Endothelial cell of umbilical vein (primary cell): ENCODE measurements at regions of chr3 and their contacts with region 1.

Region 1: GRCh38 chr3:69791919-69792399 is 52.7 kb downstream of the MITF start:
- DNase-seq: peak; percentile 79
- H3K4me3 ChIP-seq: no peak overlapping the region
- H3K27ac ChIP-seq: peak overlapping the region; percentile 5
- H3K4me1 ChIP-seq: peaks cover 20% of the 10 kb centered on the region
- H3K27me3 ChIP-seq: no peaks in the 10 kb centered on the region
- CTCF ChIP-seq: peak; percentile 22 to 38
- POLR2A ChIP-seq: no peak

Region 2: GRCh38 chr3:69451594-69451993 is 340.4 kb before region 1 on chr3:
- CTCF ChIA-PET with region 1: interaction called, 7 read pairs
- POLR2A ChIA-PET with region 1: no interaction called
- dilution Hi-C with region 1: no loop called
- intact Hi-C with region 1: loop called (anchors 10 kb)
- DNase-seq: peak; percentile 35
- H3K4me3 ChIP-seq: no peak overlapping the region
- H3K27ac ChIP-seq: no peak overlapping the region
- H3K4me1 ChIP-seq: no peaks in the 10 kb centered on the region
- H3K27me3 ChIP-seq: no peaks in the 10 kb centered on the region
- CTCF ChIP-seq: peak; percentile 23 to 36
- POLR2A ChIP-seq: no peak

Region 3: DNA sequence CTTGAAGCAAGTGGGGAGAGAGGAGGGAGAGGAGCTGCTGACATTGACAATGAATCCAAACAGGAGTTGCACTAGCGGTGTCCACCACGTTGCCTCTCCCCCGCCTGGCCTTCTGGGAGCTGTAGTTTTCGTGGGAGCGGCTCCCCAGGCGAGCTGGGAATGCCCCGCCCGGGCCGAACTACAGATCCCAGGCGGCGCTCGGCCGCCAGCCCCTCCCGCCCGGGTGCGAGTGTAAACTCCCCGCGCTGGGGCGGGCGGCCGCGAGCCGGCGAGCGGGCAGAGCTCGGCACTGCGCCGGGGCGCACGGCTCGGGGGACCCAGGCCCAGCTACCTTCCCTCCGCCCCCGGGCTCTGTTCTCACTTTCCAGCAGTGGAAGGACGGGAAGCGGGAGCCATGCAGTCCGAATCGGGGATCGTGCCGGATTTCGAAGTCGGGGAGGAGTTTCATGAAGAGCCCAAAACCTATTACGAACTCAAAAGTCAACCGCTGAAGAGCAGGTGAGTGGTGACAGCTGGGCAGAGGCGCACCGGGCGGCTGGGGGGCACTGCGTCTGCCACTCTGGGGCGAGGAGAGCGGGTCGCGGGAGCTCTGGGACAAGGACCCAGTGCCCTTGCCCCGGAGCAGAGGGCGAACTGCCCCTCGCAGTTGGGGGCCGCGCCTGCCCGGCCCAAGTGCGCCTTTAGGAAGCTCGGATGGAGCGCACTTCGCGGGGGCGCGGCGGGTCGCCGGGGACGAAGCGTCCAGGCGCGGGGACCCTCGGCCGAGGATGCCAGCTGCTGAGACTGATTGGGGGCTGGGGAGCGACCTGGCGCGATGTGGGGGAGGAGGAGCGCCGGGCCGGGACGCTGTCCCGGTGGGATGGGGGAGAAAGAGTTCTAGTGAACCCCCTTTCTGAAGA is 52.5 kb before region 1 on chr3 and contains the start of gene MITF:
- CTCF ChIA-PET with region 1: interaction called, 8 read pairs
- POLR2A ChIA-PET with region 1: no interaction called
- dilution Hi-C with region 1: no loop called
- intact Hi-C with region 1: loop called (anchors 1 kb)
- DNase-seq: peak; percentile 94
- H3K4me3 ChIP-seq: peak within 1 kb of the TSS; percentile 63 to 87 (median 74)
- H3K27ac ChIP-seq: no peak within 1 kb of the TSS
- H3K4me1 ChIP-seq: peaks cover 16% of the 10 kb centered on the region
- H3K27me3 ChIP-seq: peaks cover 0 to 6% of the 10 kb centered on the region in 2 experiments
- CTCF ChIP-seq: no peak
- POLR2A ChIP-seq: peak; percentile 30
- total RNA-seq, gene MITF: 2.5 and 3.9 TPM in 2 replicates

Region 4: GRCh38 chr3:69770219-69770618 is 21.7 kb before region 1 on chr3:
- CTCF ChIA-PET with region 1: interaction called, 6 read pairs
- POLR2A ChIA-PET with region 1: no interaction called
- dilution Hi-C with region 1: no loop called
- intact Hi-C with region 1: loop called (anchors 1 kb)
- DNase-seq: peak; percentile 77
- H3K4me3 ChIP-seq: no peak overlapping the region
- H3K27ac ChIP-seq: peak overlapping the region; percentile 66
- H3K4me1 ChIP-seq: peaks cover 22% of the 10 kb centered on the region
- H3K27me3 ChIP-seq: no peaks in the 10 kb centered on the region
- CTCF ChIP-seq: no peak
- POLR2A ChIP-seq: no peak

Region 5: GRCh38 chr3:69948246-69948862 is 156.4 kb after region 1 on chr3:
- CTCF ChIA-PET with region 1: interaction called, 8 read pairs
- POLR2A ChIA-PET with region 1: no interaction called
- dilution Hi-C with region 1: no loop called
- intact Hi-C with region 1: loop called (anchors 5 kb)
- DNase-seq: peak; percentile 60
- H3K4me3 ChIP-seq: no peak overlapping the region
- H3K27ac ChIP-seq: no peak overlapping the region
- H3K4me1 ChIP-seq: no peaks in the 10 kb centered on the region
- H3K27me3 ChIP-seq: no peaks in the 10 kb centered on the region
- CTCF ChIP-seq: peak; percentile 30 to 39
- POLR2A ChIP-seq: no peak

Region 6: GRCh38 chr3:70519913-70520659 is 728.1 kb after region 1 on chr3:
- CTCF ChIA-PET with region 1: no interaction called
- POLR2A ChIA-PET with region 1: no interaction called
- dilution Hi-C with region 1: no loop called
- intact Hi-C with region 1: no loop called
- DNase-seq: no peak
- H3K4me3 ChIP-seq: no peak overlapping the region
- H3K27ac ChIP-seq: no peak overlapping the region
- H3K4me1 ChIP-seq: no peaks in the 10 kb centered on the region
- H3K27me3 ChIP-seq: peaks cover 10 to 13% of the 10 kb centered on the region in 2 experiments
- CTCF ChIP-seq: no peak
- POLR2A ChIP-seq: no peak